Mammary epithelial cell (primary cell): ENCODE measurements at regions of chr4 and their contacts with region 1.

Region 1: DNA sequence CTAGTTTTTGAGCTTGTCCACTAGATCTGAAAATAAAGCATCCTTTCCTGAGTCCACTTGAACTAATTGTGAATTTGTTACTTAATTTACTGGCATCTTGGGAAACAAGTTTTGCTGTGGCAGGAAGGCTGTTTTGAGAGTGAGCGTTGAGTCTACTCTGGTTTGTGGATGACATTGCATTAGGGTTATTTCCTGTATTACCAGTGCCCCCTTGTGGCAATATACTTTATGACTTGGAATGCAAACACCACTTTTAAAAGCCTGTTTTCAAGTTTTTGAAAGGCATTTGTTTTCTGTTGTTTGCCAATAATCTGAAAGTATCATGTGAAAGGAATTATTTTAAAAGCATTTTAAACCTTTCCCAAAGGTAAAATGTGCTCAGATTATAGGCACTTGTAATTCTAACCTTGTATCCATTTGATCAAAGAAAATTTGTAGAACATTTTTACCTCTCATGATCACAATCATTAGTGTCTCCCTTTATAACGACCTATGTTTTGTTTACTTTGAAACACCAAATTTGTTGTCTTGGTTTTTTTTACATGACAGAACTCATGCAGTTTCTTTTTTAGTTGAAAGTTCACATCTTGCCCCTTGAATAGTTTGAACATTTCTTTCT is 18.0 kb upstream of the CYP2U1 start:
- DNase-seq: peak; percentile 62
- H3K4me3 ChIP-seq: no peak overlapping the region
- H3K27ac ChIP-seq: no peak overlapping the region
- H3K4me1 ChIP-seq: no peaks in the 10 kb centered on the region
- H3K27me3 ChIP-seq: no peaks in the 10 kb centered on the region
- CTCF ChIP-seq: peak; percentile 67 to 68

Region 2: GRCh38 chr4:107757864-107758476 is 155.4 kb before region 1 on chr4:
- CTCF ChIA-PET with region 1: no interaction called
- dilution Hi-C with region 1: loop called (anchors 25 kb)
- in situ Hi-C with region 1: loop called in 1 of 2 experiments (anchors 5 kb)
- intact Hi-C with region 1: loop called (anchors 1 kb)
- DNase-seq: no peak
- H3K4me3 ChIP-seq: no peak overlapping the region
- H3K27ac ChIP-seq: no peak overlapping the region
- H3K4me1 ChIP-seq: no peaks in the 10 kb centered on the region
- H3K27me3 ChIP-seq: no peaks in the 10 kb centered on the region
- CTCF ChIP-seq: peak; percentile 45

Region 3: DNA sequence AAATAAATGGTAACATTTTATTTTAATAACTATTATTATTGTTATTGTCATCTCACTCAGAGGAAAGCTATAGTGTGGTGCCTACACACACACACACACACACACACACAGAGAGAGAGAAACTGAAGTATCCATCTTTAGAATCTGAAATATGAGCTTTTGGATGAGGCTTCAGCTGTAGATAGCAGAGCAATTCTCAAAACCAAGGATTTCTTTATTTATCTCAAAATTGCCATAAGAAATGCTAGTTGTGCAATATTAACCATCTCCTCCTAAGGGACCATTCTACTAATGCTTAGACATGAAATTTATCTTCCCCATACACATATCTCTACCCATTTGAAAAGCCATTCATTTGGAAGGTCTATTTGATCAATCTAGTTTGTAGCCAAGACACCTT is 138.7 kb before region 1 on chr4:
- CTCF ChIA-PET with region 1: no interaction called
- dilution Hi-C with region 1: loop called (anchors 25 kb)
- in situ Hi-C with region 1: loop called in 1 of 2 experiments (anchors 10 kb)
- intact Hi-C with region 1: no loop called
- DNase-seq: no peak
- H3K4me3 ChIP-seq: no peak overlapping the region
- H3K27ac ChIP-seq: no peak overlapping the region
- H3K4me1 ChIP-seq: no peaks in the 10 kb centered on the region
- H3K27me3 ChIP-seq: no peaks in the 10 kb centered on the region
- CTCF ChIP-seq: no peak

Region 4: GRCh38 chr4:107863850-107864371 is 49.5 kb before region 1 on chr4:
- CTCF ChIA-PET with region 1: interaction called, 5 read pairs
- dilution Hi-C with region 1: no loop called
- in situ Hi-C with region 1: no loop called
- intact Hi-C with region 1: loop called (anchors 1 kb)
- DNase-seq: peak; percentile 81
- H3K4me3 ChIP-seq: no peak overlapping the region
- H3K27ac ChIP-seq: peak overlapping the region; percentile 96
- H3K4me1 ChIP-seq: peaks cover 30% of the 10 kb centered on the region
- H3K27me3 ChIP-seq: no peaks in the 10 kb centered on the region
- CTCF ChIP-seq: no peak

Region 5: GRCh38 chr4:108172753-108173598 is 259.6 kb after region 1 on chr4:
- CTCF ChIA-PET with region 1: no interaction called
- dilution Hi-C with region 1: no loop called
- in situ Hi-C with region 1: no loop called
- intact Hi-C with region 1: no loop called
- DNase-seq: peak; percentile 29
- H3K4me3 ChIP-seq: peak overlapping the region; percentile 32 to 46 (median 40)
- H3K27ac ChIP-seq: no peak overlapping the region
- H3K4me1 ChIP-seq: peaks cover 16% of the 10 kb centered on the region
- H3K27me3 ChIP-seq: peaks cover 50% of the 10 kb centered on the region
- CTCF ChIP-seq: no peak